ENCODE measurements at regions of chr17 and their contacts with region 1.

Region 1: GRCh38 chr17:47840740-47841603 is at the start of gene SCRN2:
- DNase-seq: peak; percentile 88
- H3K4me3 Mint-ChIP-seq: peak within 1 kb of the TSS; percentile 81
- H3K27ac Mint-ChIP-seq: peak within 1 kb of the TSS; percentile 65
- H3K4me1 Mint-ChIP-seq: peaks cover 7% of the 10 kb centered on the region
- H3K27me3 Mint-ChIP-seq: no peaks in the 10 kb centered on the region
- CTCF ChIP-seq: peak; percentile 99
- total RNA-seq, gene SCRN2: 15.7 and 16.2 TPM in 2 replicates

Region 2: DNA sequence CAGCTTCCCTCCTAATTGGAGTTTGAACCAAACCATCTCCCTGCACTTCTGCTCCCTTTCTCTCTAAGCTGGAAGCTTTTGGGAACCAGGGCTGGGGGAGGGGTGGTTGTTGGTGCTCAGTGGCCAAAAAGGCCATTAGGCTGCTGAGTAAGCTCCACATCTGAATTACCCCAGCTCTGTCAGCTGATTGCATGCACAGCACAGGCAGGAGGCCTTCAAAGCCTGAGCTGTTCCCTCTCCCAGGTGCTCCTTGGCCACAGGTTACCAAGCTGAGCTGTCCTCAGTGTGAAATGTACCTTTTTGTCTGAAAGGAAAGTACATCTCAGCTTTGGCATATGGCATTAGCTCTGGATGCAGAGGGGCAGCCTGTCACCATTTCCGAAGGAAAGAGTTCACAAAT is 153.2 kb before region 1 on chr17:
- CTCF ChIA-PET with region 1: no interaction called
- POLR2A ChIA-PET with region 1: no interaction called
- intact Hi-C with region 1: no loop called
- DNase-seq: peak; percentile 17
- H3K4me3 Mint-ChIP-seq: no peak overlapping the region
- H3K27ac Mint-ChIP-seq: no peak overlapping the region
- H3K4me1 Mint-ChIP-seq: peaks cover 15% of the 10 kb centered on the region
- H3K27me3 Mint-ChIP-seq: peaks cover 14% of the 10 kb centered on the region
- CTCF ChIP-seq: no peak

Region 3: DNA sequence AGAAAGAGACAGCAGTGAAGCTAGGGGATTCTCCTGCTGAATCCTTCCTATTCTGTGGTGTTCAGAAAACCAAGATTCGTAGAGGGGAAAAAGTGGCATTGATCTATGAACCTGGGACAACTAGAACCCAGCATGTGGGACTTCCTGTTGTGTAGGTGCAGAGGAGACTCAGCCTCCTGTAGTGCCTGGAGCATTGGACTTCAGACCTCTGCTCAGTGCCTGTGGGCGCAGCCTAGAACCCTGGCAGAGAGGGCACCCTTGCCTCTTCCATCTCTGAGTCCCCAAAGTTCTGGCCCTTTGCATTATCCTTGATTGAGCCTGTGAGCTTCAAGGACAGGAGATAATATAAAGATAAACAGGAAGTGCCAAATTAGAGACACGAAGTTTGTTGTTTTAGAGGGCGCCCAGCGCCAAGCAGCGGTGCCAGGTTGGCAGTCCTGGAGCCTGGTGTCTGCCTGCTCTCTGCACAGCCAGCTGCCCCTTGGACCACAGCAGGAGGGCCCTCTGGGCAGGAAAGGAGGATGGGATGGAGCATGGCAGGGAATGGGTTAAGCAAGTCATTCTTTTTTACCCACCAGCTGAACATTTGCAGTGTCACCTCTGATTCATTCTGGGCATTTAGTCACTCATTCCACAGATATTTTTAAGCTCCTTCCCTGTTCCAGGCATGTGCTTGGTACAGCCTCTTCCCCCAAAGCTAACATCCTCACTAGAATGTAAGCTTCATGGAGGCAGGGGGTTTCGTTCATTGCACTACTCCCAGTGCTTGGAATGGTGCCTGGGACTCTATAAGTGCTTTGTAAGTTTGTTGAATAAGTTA is 21.9 kb after region 1 on chr17:
- CTCF ChIA-PET with region 1: interaction called, 53 read pairs
- POLR2A ChIA-PET with region 1: interaction called, 5 read pairs
- intact Hi-C with region 1: no loop called
- DNase-seq: peak; percentile 53
- H3K4me3 Mint-ChIP-seq: no peak overlapping the region
- H3K27ac Mint-ChIP-seq: peak overlapping the region; percentile 4
- H3K4me1 Mint-ChIP-seq: peaks cover 21% of the 10 kb centered on the region
- H3K27me3 Mint-ChIP-seq: no peaks in the 10 kb centered on the region
- CTCF ChIP-seq: no peak

Region 4: GRCh38 chr17:47889734-47890529 is 49.0 kb after region 1 on chr17:
- CTCF ChIA-PET with region 1: interaction called, 523 read pairs
- POLR2A ChIA-PET with region 1: interaction called, 178 read pairs
- intact Hi-C with region 1: loop called (anchors 1 kb)
- DNase-seq: peak; percentile 81
- H3K4me3 Mint-ChIP-seq: no peak overlapping the region
- H3K27ac Mint-ChIP-seq: no peak overlapping the region
- H3K4me1 Mint-ChIP-seq: peaks cover 15% of the 10 kb centered on the region
- H3K27me3 Mint-ChIP-seq: no peaks in the 10 kb centered on the region
- CTCF ChIP-seq: peak; percentile 90

Region 5: GRCh38 chr17:48037036-48037837 is 196.3 kb after region 1 on chr17 and contains the start of gene COPZ2:
- CTCF ChIA-PET with region 1: no interaction called
- POLR2A ChIA-PET with region 1: no interaction called
- intact Hi-C with region 1: no loop called
- DNase-seq: no peak
- H3K4me3 Mint-ChIP-seq: peak within 1 kb of the TSS; percentile 63
- H3K27ac Mint-ChIP-seq: no peak within 1 kb of the TSS
- H3K4me1 Mint-ChIP-seq: no peaks in the 10 kb centered on the region
- H3K27me3 Mint-ChIP-seq: no peaks in the 10 kb centered on the region
- CTCF ChIP-seq: no peak
- total RNA-seq, gene COPZ2: 2.5 TPM in 1 of 2 replicates, not detected in the other

Measured in MCF 10A (cell line).